Right ventricle myocardium inferior (tissue), 1 donor: ENCODE measurements at regions of chr14 and their contacts with region 1.

Region 1: GRCh38 chr14:70907176-70907995 is at the start of gene PCNX1:
- DNase-seq: peak; percentile 96
- ATAC-seq: peak; percentile 91
- total RNA-seq, gene PCNX1: 33.6 TPM

Region 2: GRCh38 chr14:70955543-70956480 is 48.4 kb after region 1 on chr14:
- intact Hi-C with region 1: loop called (anchors 2 kb)
- DNase-seq: no peak
- ATAC-seq: peak; percentile 60

Region 3: GRCh38 chr14:71050204-71050823 is 142.9 kb after region 1 on chr14:
- intact Hi-C with region 1: no loop called
- DNase-seq: no peak
- ATAC-seq: no peak

Region 4: DNA sequence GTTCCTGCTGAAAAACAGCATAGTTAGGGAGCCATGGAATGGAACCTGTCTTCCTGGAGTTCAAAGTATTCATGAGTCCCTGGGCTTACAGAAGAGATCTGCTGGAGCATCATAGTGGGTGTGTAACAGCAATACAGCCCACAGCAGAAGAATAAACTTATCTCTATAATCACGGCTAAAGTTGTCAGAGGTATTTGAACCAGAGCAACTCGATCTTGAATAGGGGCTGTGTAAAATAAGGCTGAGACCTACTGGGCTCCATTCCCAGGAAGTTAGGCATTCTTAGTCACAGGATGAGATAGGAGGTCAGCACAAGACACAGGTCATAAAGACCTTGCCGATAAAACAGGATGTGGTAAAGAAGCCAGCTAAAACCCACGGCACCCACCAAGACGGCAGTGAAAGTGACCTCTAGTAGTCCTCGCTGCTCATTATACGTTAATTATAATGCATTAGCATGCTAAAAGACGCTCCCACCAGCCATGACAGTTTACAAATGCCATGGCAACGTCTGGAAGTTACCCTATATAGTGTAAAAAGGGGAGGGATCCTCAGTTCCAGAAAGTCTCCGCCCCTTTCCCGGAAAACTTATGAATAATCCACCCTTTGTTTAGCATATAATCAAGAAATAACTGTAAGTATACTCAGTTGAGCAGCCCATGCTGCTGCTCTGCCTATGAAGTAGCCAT is 223.2 kb after region 1 on chr14:
- intact Hi-C with region 1: no loop called
- DNase-seq: no peak
- ATAC-seq: no peak